Panc1 (cell line): ENCODE measurements at regions of chr5 and their contacts with region 1.

Region 1: DNA sequence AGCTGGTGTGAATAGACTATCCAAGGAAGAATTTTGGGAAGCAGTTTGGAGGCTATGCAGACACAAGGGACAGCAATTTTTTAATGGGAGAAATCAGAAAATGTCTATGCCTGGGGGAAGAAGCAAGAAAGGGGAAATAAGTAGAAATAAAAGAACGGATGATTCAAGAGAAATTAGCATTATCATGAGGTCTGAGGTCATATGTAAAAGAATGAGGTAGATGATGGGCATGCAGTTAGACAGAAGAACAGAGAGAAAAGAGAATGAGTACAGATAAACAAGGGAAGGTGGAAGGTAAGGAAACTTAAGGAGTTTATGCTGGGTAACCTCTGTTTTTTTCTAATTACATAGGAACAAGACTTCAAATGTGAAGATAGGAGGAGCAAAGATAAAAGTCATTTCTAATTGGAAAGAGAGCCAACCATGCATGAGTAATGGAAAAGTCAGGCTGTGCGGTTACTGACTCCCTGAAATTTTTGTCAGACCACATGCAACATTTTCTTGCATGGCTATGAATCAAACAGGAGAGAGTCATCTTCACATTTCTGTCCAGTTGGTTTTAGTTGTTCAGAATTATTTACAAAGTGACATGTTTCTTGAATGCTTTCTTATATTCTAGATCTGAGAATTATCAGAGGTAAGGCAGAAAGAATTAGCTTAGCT is 101.0 kb upstream of the PIK3R1 start:
- DNase-seq: no peak
- ATAC-seq: no peak
- H3K4me3 ChIP-seq: no peak overlapping the region
- H3K27ac ChIP-seq: no peak overlapping the region
- H3K4me1 ChIP-seq: no peaks in the 10 kb centered on the region
- H3K27me3 ChIP-seq: peaks cover 4% of the 10 kb centered on the region; the same call in 1 of the 2 replicates
- CTCF ChIP-seq: no peak

Region 2: GRCh38 chr5:68149189-68149588 is 34.7 kb after region 1 on chr5:
- CTCF ChIA-PET with region 1: no interaction called
- POLR2A ChIA-PET with region 1: no interaction called
- in situ Hi-C with region 1: no loop called
- intact Hi-C with region 1: no loop called
- DNase-seq: no peak
- ATAC-seq: no peak
- H3K4me3 ChIP-seq: no peak overlapping the region
- H3K27ac ChIP-seq: no peak overlapping the region
- H3K4me1 ChIP-seq: no peaks in the 10 kb centered on the region
- H3K27me3 ChIP-seq: no peaks in the 10 kb centered on the region
- CTCF ChIP-seq: no peak

Region 3: GRCh38 chr5:68303038-68303738 is 188.7 kb after region 1 on chr5:
- CTCF ChIA-PET with region 1: no interaction called
- POLR2A ChIA-PET with region 1: interaction called, 12 read pairs
- in situ Hi-C with region 1: no loop called
- intact Hi-C with region 1: no loop called
- DNase-seq: no peak
- ATAC-seq: no peak
- H3K4me3 ChIP-seq: no peak overlapping the region
- H3K27ac ChIP-seq: no peak overlapping the region
- H3K4me1 ChIP-seq: no peaks in the 10 kb centered on the region
- H3K27me3 ChIP-seq: no peaks in the 10 kb centered on the region
- CTCF ChIP-seq: no peak